ENCODE measurements at regions of chr14 and their contacts with region 1.

Region 1: DNA sequence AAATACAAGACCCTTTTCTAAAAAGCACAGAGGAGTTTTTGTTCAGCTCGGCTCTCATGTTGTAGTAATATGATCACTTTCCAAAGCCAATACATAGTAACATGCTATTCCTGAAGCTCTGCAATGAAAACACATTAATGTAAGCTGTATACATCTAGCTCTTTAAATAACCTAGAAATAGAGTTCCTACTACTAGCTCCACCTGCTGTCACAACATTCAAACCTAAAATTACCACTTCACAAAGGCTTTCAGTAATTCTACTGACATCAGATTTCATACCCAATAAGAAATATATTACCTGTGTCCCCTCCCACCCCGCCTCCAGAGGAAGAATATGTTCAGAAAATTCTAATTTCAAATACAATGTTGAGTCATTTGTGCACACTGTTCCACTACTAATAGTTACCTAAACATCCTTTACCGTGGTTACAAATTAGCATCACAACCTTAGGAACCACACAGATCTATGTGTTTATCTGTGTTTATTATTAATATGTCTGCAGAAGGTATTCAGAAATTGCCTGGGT is 17.8 kb downstream of the EFCAB11 start:
- DNase-seq: no peak
- ATAC-seq: no peak
- H3K4me3 ChIP-seq: no peak overlapping the region
- H3K4me3 Mint-ChIP-seq: no peak overlapping the region
- H3K27ac ChIP-seq: no peak overlapping the region
- H3K27ac Mint-ChIP-seq: no peak overlapping the region
- H3K4me1 ChIP-seq: no peaks in the 10 kb centered on the region
- H3K4me1 Mint-ChIP-seq: no peaks in the 10 kb centered on the region
- H3K27me3 ChIP-seq: no peaks in the 10 kb centered on the region
- H3K27me3 Mint-ChIP-seq: no peaks in the 10 kb centered on the region
- CTCF ChIP-seq: no peak

Region 2: GRCh38 chr14:88695870-88696269 is 1240.9 kb before region 1 on chr14:
- CTCF ChIA-PET with region 1: no interaction called
- POLR2A ChIA-PET with region 1: no interaction called
- intact Hi-C with region 1: no loop called
- DNase-seq: no peak
- ATAC-seq: no peak
- H3K4me3 ChIP-seq: no peak overlapping the region
- H3K4me3 Mint-ChIP-seq: no peak overlapping the region
- H3K27ac ChIP-seq: no peak overlapping the region
- H3K27ac Mint-ChIP-seq: no peak overlapping the region
- H3K4me1 ChIP-seq: no peaks in the 10 kb centered on the region
- H3K4me1 Mint-ChIP-seq: no peaks in the 10 kb centered on the region
- H3K27me3 ChIP-seq: no peaks in the 10 kb centered on the region
- H3K27me3 Mint-ChIP-seq: no peaks in the 10 kb centered on the region
- CTCF ChIP-seq: no peak

Region 3: GRCh38 chr14:90109646-90110257 is 173.0 kb after region 1 on chr14:
- CTCF ChIA-PET with region 1: no interaction called
- POLR2A ChIA-PET with region 1: no interaction called
- intact Hi-C with region 1: no loop called
- DNase-seq: no peak
- ATAC-seq: no peak
- H3K4me3 ChIP-seq: no peak overlapping the region
- H3K4me3 Mint-ChIP-seq: no peak overlapping the region
- H3K27ac ChIP-seq: no peak overlapping the region
- H3K27ac Mint-ChIP-seq: no peak overlapping the region
- H3K4me1 ChIP-seq: no peaks in the 10 kb centered on the region
- H3K4me1 Mint-ChIP-seq: no peaks in the 10 kb centered on the region
- H3K27me3 ChIP-seq: no peaks in the 10 kb centered on the region
- H3K27me3 Mint-ChIP-seq: peaks cover 26% of the 10 kb centered on the region
- CTCF ChIP-seq: no peak

Region 4: DNA sequence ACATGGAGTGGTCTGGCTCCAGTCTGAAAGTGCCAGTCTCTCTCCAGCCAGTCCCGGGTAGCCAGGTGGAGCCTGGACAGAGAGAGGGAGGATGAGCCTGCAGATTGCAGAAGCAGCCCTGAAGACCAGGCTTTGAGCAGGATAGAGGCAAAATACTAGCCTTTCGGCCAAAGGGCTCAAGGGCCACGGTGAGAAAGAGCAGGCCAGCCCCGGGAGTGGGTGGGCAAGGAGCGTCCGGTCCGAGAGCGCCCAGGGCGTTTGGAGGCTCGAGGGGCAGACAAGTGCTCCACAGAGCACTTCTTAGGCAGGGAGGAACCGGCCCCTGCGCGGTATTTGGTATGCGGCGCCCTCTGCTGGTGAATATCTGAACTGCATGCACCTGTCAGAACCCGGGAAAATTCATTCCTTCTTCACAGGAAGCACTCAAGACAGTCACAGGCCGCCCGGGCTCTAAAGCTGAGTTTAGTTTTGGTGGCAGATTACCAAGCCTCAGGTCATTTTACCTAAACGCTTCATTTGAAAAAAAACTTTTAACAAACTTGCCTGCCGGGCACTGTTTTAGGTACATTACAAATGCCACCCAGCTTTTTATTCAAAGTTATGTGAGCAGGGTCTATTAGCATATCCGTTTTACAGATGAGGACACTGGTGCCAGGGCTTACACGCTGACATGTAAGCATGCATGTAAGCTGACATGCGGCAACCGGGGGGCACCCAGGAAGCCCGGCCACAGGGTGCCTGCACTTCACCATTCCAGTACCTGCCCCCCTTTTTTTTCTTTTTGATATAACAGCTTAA is 298.7 kb after region 1 on chr14:
- CTCF ChIA-PET with region 1: interaction called, 42 read pairs
- POLR2A ChIA-PET with region 1: no interaction called
- intact Hi-C with region 1: loop called in 1 of 2 experiments (anchors 1 kb)
- DNase-seq: peak; percentile 29 to 75 (median 58)
- ATAC-seq: peak; percentile 69
- H3K4me3 ChIP-seq: no peak overlapping the region
- H3K4me3 Mint-ChIP-seq: no peak overlapping the region
- H3K27ac ChIP-seq: no peak overlapping the region
- H3K27ac Mint-ChIP-seq: no peak overlapping the region
- H3K4me1 ChIP-seq: no peaks in the 10 kb centered on the region
- H3K4me1 Mint-ChIP-seq: no peaks in the 10 kb centered on the region
- H3K27me3 ChIP-seq: peaks cover 4 to 6% of the 10 kb centered on the region in 2 experiments
- H3K27me3 Mint-ChIP-seq: peaks cover 14% of the 10 kb centered on the region
- CTCF ChIP-seq: peak; percentile 85

Measured in CD8-positive, alpha-beta T cell (primary cell).